ENCODE measurements at regions of chr2 and their contacts with region 1.

Region 1: DNA sequence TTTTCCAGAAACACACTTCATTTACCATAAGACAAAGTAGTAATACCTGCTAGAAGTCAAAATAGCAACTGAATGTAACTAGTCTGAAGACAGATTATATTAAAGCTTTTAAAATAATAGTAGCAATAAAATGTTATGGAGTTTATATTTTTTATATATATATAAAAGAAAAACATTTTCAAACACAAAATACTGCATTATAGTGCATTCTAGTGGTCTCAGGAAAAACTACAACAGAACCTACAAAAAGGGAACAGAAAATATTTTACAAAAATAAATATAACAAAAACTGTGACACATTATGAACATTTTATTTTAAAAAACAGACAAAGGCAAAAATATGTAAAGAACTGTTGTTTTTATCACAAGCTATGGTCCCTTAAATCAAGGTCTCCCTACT is 48.0 kb downstream of the STRN start:
- DNase-seq: no peak
- H3K4me3 ChIP-seq: no peak overlapping the region
- H3K27ac ChIP-seq: no peak overlapping the region
- H3K27me3 ChIP-seq: no peaks in the 10 kb centered on the region
- CTCF ChIP-seq: peak in 54 of 56 donors; percentile 12 to 76 (median 52)

Region 2: DNA sequence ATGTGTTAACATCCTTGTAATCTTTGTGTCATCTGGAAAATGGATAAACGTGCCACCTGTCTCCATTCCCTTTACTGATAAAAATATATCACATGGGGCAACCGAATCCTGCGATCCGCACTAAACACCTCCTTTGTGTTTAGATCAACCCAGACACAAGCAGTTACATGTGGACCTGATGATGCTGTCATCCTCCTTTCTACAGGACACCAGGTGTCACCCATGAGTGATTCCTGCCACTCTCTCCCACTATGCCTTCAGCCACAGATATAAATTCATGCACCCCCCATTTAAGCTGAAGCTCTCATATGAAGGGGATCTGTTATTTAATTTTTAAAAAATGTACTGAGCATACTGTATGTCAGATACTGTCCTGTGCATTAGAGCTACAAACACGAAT is 140.5 kb before region 1 on chr2:
- intact Hi-C with region 1: loop called (anchors 5 to 10 kb)
- DNase-seq: no peak
- H3K4me3 ChIP-seq: no peak overlapping the region
- H3K27ac ChIP-seq: no peak overlapping the region
- H3K27me3 ChIP-seq: no peaks in the 10 kb centered on the region
- CTCF ChIP-seq: no peak